PC-9 (cell line): ENCODE measurements at regions of chr6 and their contacts with region 1.

Region 1: DNA sequence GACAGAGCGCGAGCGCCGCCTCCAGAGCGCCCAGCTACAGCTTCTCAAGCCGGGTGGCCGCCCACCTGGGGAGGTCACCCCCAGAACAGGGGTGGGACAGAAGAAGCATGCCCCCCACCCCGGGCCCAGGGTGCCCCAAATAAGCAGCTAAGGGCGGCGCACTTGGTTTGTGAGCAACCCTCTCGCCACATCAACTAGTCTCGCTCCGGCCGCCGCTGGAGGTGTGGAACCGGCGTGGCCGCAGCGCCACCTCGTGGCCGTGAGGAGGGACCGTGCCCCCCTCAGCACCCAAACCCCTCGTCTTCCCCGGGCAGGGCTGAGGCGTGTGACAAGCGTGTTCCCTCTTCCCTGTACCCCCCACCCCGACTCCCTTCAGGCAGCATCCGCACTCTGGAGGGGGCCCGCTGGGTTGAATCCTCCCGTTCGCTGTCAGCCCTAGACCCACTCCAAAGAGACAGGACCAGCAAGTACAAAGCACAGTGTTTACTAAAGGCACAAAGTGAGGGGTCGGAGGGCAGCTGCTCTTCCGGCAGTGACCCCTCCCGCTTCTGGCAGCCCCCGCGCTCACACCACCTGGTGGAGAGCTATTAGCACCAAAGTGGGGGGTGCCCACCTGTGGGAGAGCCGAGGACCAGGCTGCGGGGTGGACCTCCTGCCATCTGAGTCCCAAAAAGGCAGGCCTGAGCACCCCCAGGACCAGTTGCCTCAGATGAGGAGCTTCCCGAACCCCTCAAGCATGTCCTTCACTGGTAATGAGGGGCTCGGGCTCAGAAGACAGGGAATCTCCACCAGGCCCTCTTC is 45.4 kb downstream of the MDFI start:
- DNase-seq: peak in 1 of 2 experiments; percentile 72
- H3K4me3 ChIP-seq: peak overlapping the region; percentile 31; the same call in 1 of the 2 replicates
- H3K27ac ChIP-seq: no peak overlapping the region
- H3K4me1 ChIP-seq: peaks cover 14% of the 10 kb centered on the region; the same call in 1 of the 2 replicates
- H3K27me3 ChIP-seq: no peaks in the 10 kb centered on the region
- CTCF ChIP-seq: peak; percentile 86

Region 2: GRCh38 chr6:41306187-41306854 is 377.4 kb before region 1 on chr6:
- CTCF ChIA-PET with region 1: no interaction called
- POLR2A ChIA-PET with region 1: no interaction called
- intact Hi-C with region 1: loop called (anchors 5 kb)
- DNase-seq: peak; percentile 52 to 65
- H3K4me3 ChIP-seq: no peak overlapping the region
- H3K27ac ChIP-seq: no peak overlapping the region
- H3K4me1 ChIP-seq: no peaks in the 10 kb centered on the region
- H3K27me3 ChIP-seq: peaks cover 8% of the 10 kb centered on the region; the same call in 1 of the 2 replicates
- CTCF ChIP-seq: peak; percentile 78

Region 3: GRCh38 chr6:41424370-41425058 is 259.2 kb before region 1 on chr6:
- CTCF ChIA-PET with region 1: interaction called, 16 read pairs
- POLR2A ChIA-PET with region 1: no interaction called
- intact Hi-C with region 1: loop called (anchors 1 kb)
- DNase-seq: peak; percentile 48 to 81
- H3K4me3 ChIP-seq: no peak overlapping the region
- H3K27ac ChIP-seq: no peak overlapping the region
- H3K4me1 ChIP-seq: peaks cover 6% of the 10 kb centered on the region; the same call in 1 of the 2 replicates
- H3K27me3 ChIP-seq: peaks cover 29% of the 10 kb centered on the region
- CTCF ChIP-seq: peak; percentile 95

Region 4: GRCh38 chr6:41463062-41463930 is 220.4 kb before region 1 on chr6:
- CTCF ChIA-PET with region 1: no interaction called
- POLR2A ChIA-PET with region 1: no interaction called
- intact Hi-C with region 1: loop called (anchors 2 kb)
- DNase-seq: peak; percentile 37 to 60
- H3K4me3 ChIP-seq: no peak overlapping the region
- H3K27ac ChIP-seq: no peak overlapping the region
- H3K4me1 ChIP-seq: peaks cover 11% of the 10 kb centered on the region
- H3K27me3 ChIP-seq: peaks cover 23% of the 10 kb centered on the region; the same call in 1 of the 2 replicates
- CTCF ChIP-seq: peak; percentile 53

Region 5: DNA sequence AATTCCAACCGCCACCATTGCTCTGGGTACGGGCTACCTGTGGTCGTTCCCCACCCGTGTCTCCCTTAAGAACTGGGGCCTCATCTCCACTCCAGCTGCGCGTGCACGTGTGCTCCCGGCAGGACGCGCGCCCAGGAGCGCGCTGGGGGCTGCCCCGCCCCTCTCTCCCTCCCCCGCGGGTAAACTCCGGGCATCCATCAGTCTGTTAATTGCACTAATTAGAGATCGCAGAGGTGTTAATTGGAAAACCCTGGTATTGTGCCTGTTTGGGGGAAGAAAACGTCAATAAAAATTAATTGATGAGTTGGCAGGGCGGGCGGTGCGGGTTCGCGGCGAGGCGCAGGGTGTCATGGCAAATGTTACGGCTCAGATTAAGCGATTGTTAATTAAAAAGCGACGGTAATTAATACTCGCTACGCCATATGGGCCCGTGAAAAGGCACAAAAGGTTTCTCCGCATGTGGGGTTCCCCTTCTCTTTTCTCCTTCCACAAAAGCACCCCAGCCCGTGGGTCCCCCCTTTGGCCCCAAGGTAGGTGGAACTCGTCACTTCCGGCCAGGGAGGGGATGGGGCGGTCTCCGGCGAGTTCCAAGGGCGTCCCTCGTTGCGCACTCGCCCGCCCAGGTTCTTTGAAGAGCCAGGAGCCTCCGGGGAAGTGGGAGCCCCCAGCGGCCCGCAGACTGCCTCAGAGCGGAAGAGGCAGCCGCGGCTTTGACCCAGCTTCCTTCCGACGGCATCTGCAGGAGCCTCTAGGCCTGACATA is 123.1 kb before region 1 on chr6:
- CTCF ChIA-PET with region 1: no interaction called
- POLR2A ChIA-PET with region 1: no interaction called
- intact Hi-C with region 1: no loop called
- DNase-seq: no peak
- H3K4me3 ChIP-seq: no peak overlapping the region
- H3K27ac ChIP-seq: no peak overlapping the region
- H3K4me1 ChIP-seq: no peaks in the 10 kb centered on the region
- H3K27me3 ChIP-seq: no peaks in the 10 kb centered on the region
- CTCF ChIP-seq: no peak

Region 6: DNA sequence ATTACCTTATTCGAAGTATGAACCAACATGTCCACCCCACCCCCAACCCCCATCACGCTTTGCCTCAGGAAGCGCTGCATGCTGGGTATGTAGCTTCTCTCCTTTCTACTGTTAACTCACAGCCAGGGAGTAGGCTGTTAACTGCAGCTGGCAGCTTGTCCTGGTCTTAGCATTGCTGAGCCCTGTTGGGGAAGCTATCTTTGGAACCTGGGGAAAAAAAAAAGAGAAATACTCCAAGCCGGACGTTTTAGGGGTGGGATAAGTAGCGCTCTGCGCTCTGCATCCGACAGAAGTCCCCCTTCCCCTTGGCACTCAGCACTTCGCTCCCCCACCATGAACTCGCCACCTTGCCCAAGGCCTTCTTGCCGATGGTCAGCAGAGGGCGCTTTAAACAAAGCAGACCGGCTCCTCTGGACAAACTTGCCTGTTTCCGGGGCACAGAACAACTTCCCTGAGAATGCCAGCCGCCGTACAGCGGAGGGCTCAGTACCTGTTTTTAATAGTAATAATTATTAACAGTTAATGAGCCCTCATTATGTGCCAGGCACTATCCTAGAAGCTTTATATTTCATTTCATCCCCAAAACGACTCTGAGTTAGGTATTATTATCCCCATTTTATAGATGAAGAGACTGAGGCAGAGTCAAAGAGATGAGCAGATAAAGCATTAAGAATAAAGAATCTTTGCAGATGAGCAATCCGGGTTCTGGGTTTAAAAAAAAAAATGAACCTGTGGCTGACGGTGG is 80.7 kb before region 1 on chr6:
- CTCF ChIA-PET with region 1: interaction called, 18 read pairs
- POLR2A ChIA-PET with region 1: no interaction called
- intact Hi-C with region 1: loop called (anchors 1 kb)
- DNase-seq: peak; percentile 62 to 76
- H3K4me3 ChIP-seq: no peak overlapping the region; the same call in 1 of the 2 replicates
- H3K27ac ChIP-seq: no peak overlapping the region
- H3K4me1 ChIP-seq: no peaks in the 10 kb centered on the region
- H3K27me3 ChIP-seq: no peaks in the 10 kb centered on the region
- CTCF ChIP-seq: peak; percentile 92

Region 7: DNA sequence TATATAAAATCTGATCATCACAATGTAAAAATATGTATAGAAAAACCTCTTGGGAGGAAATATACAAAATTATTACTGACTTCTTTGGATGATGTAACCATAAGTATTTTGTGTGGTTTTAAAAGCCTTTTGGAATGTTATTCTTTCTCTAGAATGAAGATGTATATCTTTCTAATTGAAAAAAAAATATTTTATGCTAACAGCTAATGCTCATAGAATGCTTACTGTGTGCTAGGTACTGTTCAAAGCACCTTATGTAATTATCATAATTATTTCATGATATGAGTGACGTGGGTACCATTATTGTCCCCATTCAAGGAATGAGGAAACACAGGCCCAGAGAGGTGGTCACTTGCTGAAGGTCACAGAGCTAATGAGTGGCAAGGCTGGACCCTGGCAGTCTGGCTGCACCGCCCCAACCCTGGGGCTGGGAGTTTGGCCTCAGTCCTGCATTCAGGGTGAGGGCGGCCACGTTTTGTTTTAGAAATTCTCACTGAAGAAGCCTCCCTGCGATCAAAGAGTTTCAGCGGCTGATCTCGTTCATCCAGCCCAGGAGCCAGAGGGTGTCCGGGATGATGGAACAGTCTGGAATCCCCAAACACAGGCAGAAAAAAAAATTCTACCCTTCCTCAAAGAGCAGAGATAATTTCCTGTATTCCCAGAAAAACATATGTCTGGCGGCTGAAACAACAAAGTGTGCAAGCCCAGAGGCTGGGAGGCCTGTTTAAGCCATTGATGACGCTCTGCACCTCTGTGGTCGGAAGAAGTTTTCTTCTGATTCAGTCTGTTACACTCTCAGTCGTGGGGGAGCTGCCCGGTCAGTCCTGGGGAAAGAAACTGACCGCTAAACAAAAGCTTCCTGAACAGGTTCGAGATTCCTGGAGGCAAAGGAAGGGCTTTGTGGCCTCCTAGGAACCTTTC is 14.4 kb after region 1 on chr6:
- CTCF ChIA-PET with region 1: interaction called, 6 read pairs
- POLR2A ChIA-PET with region 1: interaction called, 40 read pairs
- intact Hi-C with region 1: no loop called
- DNase-seq: peak; percentile 65 to 85
- H3K4me3 ChIP-seq: no peak overlapping the region
- H3K27ac ChIP-seq: peak overlapping the region; percentile 78
- H3K4me1 ChIP-seq: peaks cover 28% of the 10 kb centered on the region
- H3K27me3 ChIP-seq: no peaks in the 10 kb centered on the region
- CTCF ChIP-seq: no peak

Region 8: GRCh38 chr6:41735427-41736356 is 52.0 kb after region 1 on chr6 and contains the start of gene TFEB:
- CTCF ChIA-PET with region 1: interaction called, 5 read pairs
- POLR2A ChIA-PET with region 1: no interaction called
- intact Hi-C with region 1: loop called (anchors 1 kb)
- DNase-seq: peak; percentile 81 to 94
- H3K4me3 ChIP-seq: peak within 1 kb of the TSS; percentile 57
- H3K27ac ChIP-seq: no peak within 1 kb of the TSS
- H3K4me1 ChIP-seq: peaks cover 24% of the 10 kb centered on the region
- H3K27me3 ChIP-seq: no peaks in the 10 kb centered on the region
- CTCF ChIP-seq: peak; percentile 75
- total RNA-seq, gene TFEB: 7.3 and 8.6 TPM in 2 replicates

Region 9: GRCh38 chr6:41976794-41977484 is 293.2 kb after region 1 on chr6:
- CTCF ChIA-PET with region 1: no interaction called
- POLR2A ChIA-PET with region 1: no interaction called
- intact Hi-C with region 1: no loop called
- DNase-seq: peak in 1 of 2 experiments; percentile 77
- H3K4me3 ChIP-seq: no peak overlapping the region
- H3K27ac ChIP-seq: 0 out of 2 replicates have a peak overlapping the region, but pooled peaks have one; percentile 15
- H3K4me1 ChIP-seq: peaks cover 13% of the 10 kb centered on the region
- H3K27me3 ChIP-seq: no peaks in the 10 kb centered on the region
- CTCF ChIP-seq: no peak